Activated CD8-positive, alpha-beta T cell treated with anti-CD3 and anti-CD28 coated beads, Interleukin-2, amount 10 ng/mL, durations not matched to agents 7 days and 5 days (primary cell): ENCODE measurements at regions of chr7 and their contacts with region 1.

Region 1: GRCh38 chr7:104923010-104923421 is 91.0 kb upstream of the KMT2E start:
- DNase-seq: peak; percentile 86
- ATAC-seq: peak; percentile 98
- H3K4me3 Mint-ChIP-seq: no peak overlapping the region
- H3K27ac Mint-ChIP-seq: peak overlapping the region; percentile 52
- H3K4me1 Mint-ChIP-seq: peaks cover 7% of the 10 kb centered on the region
- H3K27me3 Mint-ChIP-seq: peaks cover 6% of the 10 kb centered on the region

Region 2: GRCh38 chr7:104643587-104644217 is 279.3 kb before region 1 on chr7:
- CTCF ChIA-PET with region 1: interaction called, 19 read pairs
- POLR2A ChIA-PET with region 1: no interaction called
- DNase-seq: no peak
- ATAC-seq: no peak
- H3K4me3 Mint-ChIP-seq: no peak overlapping the region
- H3K27ac Mint-ChIP-seq: no peak overlapping the region
- H3K4me1 Mint-ChIP-seq: no peaks in the 10 kb centered on the region
- H3K27me3 Mint-ChIP-seq: no peaks in the 10 kb centered on the region

Region 3: DNA sequence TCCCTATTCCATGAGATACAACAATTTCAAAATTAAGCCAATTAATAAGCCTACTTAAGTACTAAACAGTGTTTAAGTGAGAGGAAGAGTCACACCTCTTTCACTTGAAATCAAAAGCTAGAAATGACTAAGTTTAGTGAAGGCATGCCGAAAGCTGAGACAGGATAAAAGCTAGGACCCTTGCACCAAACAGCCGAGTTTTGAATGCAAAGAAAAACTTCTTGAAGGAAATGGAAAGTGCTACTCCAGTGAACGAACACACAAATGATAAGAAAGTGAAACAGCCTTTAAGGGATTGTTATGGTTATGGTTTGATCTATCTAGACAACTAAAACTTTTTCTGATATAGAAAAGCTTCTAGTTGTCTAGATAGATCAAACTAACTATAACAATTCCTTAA is 44.4 kb before region 1 on chr7:
- CTCF ChIA-PET with region 1: interaction called, 84 read pairs
- POLR2A ChIA-PET with region 1: no interaction called
- DNase-seq: no peak
- ATAC-seq: no peak
- H3K4me3 Mint-ChIP-seq: no peak overlapping the region
- H3K27ac Mint-ChIP-seq: no peak overlapping the region
- H3K4me1 Mint-ChIP-seq: peaks cover 10% of the 10 kb centered on the region
- H3K27me3 Mint-ChIP-seq: no peaks in the 10 kb centered on the region

Region 4: DNA sequence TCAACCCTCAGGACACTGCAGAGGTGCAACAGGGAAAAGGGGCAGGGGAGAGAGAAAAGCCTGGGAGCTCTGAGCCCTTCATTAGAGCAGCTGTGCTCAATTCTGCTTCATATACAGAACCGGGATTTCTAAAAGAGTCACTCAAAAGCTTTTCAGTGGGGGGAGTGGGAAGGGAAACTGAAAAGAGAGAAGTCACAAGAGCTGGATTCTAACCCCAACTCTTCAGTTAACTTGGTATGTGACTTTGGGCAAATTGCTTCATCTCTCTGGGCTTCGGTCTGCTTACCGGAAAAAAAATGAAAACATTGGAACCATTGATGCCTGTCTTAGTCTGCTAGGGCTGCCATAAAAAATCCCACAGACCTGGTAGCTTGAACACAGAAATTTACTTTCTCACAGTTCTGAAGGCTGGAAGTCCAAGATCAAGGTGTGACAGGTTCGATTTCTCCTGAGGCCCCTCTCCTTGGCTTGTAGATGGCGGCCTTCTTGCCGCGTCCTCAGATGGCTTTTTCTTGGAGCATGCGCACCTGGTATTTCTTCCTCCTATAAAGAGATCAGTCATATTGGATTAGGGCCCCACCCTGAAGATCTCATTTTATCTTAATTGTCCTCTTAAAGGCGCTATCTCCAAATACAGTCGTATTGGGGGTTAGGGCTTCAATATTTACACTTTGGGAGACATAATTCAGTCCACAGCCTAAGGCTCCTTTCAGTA is 27.3 kb before region 1 on chr7:
- CTCF ChIA-PET with region 1: interaction called, 10 read pairs
- POLR2A ChIA-PET with region 1: no interaction called
- DNase-seq: no peak
- ATAC-seq: no peak
- H3K4me3 Mint-ChIP-seq: no peak overlapping the region
- H3K27ac Mint-ChIP-seq: no peak overlapping the region
- H3K4me1 Mint-ChIP-seq: peaks cover 7% of the 10 kb centered on the region
- H3K27me3 Mint-ChIP-seq: peaks cover 8% of the 10 kb centered on the region

Region 5: DNA sequence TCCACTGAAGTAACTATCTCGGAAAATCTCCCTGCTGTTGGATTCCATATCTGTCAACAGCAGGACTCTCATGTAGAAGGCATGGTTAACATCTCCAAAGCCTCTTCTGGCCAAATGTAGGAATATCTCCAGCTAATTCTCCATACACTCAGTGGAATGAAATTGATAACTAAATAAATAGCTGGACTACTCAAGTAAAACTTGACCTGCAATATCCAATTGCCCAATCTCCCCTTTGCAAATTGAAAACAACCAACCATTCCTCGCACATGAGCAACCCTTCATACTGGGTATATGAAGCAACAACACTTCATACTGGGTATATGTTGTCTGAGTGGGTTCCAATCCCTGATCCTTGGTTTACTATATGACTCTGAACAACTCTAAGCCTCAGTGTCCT is 14.4 kb before region 1 on chr7:
- CTCF ChIA-PET with region 1: interaction called, 16 read pairs
- POLR2A ChIA-PET with region 1: no interaction called
- DNase-seq: no peak
- ATAC-seq: no peak
- H3K4me3 Mint-ChIP-seq: no peak overlapping the region
- H3K27ac Mint-ChIP-seq: no peak overlapping the region
- H3K4me1 Mint-ChIP-seq: no peaks in the 10 kb centered on the region
- H3K27me3 Mint-ChIP-seq: peaks cover 30% of the 10 kb centered on the region

Region 6: DNA sequence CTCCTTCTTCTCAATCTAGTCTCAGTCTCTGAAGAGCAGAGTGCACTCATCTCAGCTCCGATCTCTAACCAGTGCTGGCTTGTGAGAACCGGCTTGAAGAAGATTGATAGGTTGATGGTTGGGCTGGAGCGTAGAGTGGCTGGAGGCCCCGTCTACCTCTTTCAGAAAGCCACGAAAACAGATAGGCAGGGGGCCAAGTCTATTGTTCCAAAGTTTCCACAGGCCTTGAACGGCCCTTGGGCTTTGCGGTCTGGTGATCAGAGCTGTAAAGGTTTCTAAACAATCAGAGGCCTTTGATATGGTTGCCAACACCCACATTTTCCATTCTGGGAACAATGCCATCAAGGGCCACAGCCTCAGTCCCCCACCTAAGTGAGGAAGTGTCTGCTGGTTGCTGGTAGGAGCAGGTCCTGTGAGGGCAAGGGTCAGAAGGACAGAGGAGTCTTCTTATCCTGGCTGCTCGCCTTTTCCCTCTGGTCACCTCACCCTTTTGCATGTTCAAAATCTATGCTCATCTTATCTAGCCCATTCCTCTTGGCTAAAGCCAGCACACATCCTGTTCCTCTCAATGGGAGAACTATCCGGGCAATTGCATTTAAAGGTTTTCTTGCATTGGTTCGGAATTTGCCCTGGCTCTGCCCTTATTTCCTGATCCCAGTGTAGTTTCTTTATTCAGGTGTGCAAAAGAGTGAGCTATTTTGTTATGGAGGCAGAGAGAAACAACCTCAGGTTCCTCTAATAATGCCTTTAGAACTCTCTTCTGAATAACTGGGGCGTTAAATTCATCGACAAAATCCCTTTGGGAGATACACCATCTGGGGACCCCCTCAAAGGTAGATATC is 20.7 kb after region 1 on chr7:
- CTCF ChIA-PET with region 1: interaction called, 11 read pairs
- POLR2A ChIA-PET with region 1: interaction called, 29 read pairs
- DNase-seq: peak; percentile 76
- ATAC-seq: peak; percentile 51
- H3K4me3 Mint-ChIP-seq: peak overlapping the region; percentile 83
- H3K27ac Mint-ChIP-seq: peak overlapping the region; percentile 100
- H3K4me1 Mint-ChIP-seq: peaks cover 70% of the 10 kb centered on the region
- H3K27me3 Mint-ChIP-seq: no peaks in the 10 kb centered on the region